ENCODE measurements at regions of chr19 and their contacts with region 1.

Region 1: DNA sequence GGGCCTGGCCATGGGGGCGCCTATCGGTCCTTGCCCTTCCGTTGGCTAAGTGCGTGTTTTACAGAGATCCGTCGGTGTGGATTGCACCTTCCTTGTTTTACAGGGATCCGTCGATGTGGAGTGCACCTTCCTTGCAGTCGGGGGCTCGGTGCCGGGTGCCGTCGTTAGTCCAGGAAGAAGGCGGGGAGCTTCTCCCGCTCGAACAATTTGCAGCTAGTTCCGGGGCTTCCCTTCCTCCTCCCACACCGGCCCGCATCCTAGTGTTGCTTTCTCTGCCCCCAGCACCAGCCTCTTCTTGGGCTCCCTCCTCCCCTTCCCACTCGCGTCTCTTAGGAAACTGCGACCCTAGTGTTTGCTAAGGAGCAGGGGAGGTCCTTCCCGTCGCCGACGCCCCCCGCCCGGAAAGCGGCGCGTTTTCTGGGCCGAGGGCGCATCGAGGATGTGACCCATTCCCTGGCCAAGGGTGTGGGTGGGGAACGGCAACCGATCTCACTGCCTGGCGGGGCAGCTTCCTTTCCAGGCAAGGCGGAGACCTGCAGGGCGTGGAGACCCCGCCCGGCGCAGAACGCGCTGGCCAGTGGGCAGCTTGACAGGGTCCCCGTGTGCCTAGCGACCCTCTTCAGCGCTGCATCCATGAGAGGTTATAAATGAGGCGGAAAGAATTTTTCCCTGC is 75.7 kb upstream of the ZNF91 start:
- DNase-seq: peak in 4 of 5 donors; percentile 33 to 51 (median 42)
- H3K4me3 ChIP-seq: peak overlapping the region; percentile 16 to 54 (median 34)
- H3K27ac ChIP-seq: no peak overlapping the region
- H3K4me1 ChIP-seq: peaks cover 0 to 2% (median 0%) of the 10 kb centered on the region in 3 donors
- H3K27me3 ChIP-seq: no peaks in the 10 kb centered on the region
- CTCF ChIP-seq: no peak

Region 2: GRCh38 chr19:23321948-23322549 is 149.0 kb before region 1 on chr19:
- intact Hi-C with region 1: loop called (anchors 5 kb)
- DNase-seq: no peak
- H3K4me3 ChIP-seq: no peak overlapping the region
- H3K27ac ChIP-seq: no peak overlapping the region
- H3K4me1 ChIP-seq: no peaks in the 10 kb centered on the region
- H3K27me3 ChIP-seq: no peaks in the 10 kb centered on the region
- CTCF ChIP-seq: no peak

Region 3: GRCh38 chr19:23709347-23709746 is 238.3 kb after region 1 on chr19:
- intact Hi-C with region 1: no loop called
- DNase-seq: no peak
- H3K4me3 ChIP-seq: no peak overlapping the region
- H3K27ac ChIP-seq: no peak overlapping the region
- H3K4me1 ChIP-seq: no peaks in the 10 kb centered on the region
- H3K27me3 ChIP-seq: no peaks in the 10 kb centered on the region
- CTCF ChIP-seq: no peak